ENCODE measurements at regions of chr1 and their contacts with region 1.

Region 1: DNA sequence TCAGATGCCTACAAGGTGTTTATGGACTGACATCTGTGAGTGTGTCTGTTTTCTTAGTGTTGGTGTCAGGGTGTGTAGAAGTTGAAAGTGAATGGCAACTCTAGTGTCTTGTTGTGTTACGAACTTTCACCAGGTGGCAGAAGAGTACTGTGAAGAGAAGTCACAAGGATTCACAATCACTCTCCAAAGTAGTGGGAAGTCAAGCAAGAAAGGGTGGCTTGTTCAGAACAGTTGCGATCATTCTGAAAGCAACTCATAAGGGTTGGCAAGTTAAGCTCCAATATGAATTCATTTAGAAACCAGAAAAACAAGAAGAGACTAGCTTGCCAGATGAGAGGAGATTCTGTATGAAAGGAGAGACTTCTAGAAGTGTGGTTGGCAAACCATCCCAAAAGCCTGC is 86.1 kb downstream of the FASLG start:
- DNase-seq: peak; percentile 82
- ATAC-seq: peak; percentile 68
- H3K4me3 ChIP-seq: no peak overlapping the region
- H3K4me3 Mint-ChIP-seq: peak overlapping the region; percentile 61
- H3K27ac ChIP-seq: no peak overlapping the region
- H3K27ac Mint-ChIP-seq: peak overlapping the region; percentile 13
- H3K4me1 ChIP-seq: peaks cover 26 to 27% of the 10 kb centered on the region in 2 donors
- H3K4me1 Mint-ChIP-seq: peaks cover 32% of the 10 kb centered on the region
- H3K27me3 ChIP-seq: peaks cover 0 to 8% (median 0%) of the 10 kb centered on the region in 4 experiments
- H3K27me3 Mint-ChIP-seq: peaks cover 5% of the 10 kb centered on the region
- CTCF ChIP-seq: peak; percentile 83

Region 2: DNA sequence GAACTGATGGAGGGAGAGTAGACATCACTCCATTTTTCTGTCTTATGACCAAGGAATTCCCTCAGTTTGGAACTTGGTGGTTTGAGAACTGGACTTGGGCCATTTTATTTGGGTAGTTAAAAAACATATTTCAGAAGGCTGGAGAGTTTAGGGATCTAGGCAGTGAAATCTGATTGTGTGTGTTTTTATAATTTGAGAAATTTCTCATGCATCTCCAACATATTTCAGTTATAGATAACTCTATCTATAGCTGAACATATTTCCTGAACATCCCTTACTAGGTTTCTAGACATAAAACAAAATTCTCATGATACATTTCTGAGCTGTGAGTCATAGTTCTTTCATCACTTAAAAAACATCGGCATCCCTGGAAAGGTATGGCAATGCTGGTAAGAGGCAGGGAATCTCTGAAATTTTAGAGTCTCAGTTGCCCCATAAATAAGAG is 16.6 kb after region 1 on chr1:
- CTCF ChIA-PET with region 1: interaction called, 53 read pairs
- POLR2A ChIA-PET with region 1: no interaction called
- intact Hi-C with region 1: no loop called
- DNase-seq: no peak
- ATAC-seq: no peak
- H3K4me3 ChIP-seq: no peak overlapping the region
- H3K4me3 Mint-ChIP-seq: no peak overlapping the region
- H3K27ac ChIP-seq: no peak overlapping the region
- H3K27ac Mint-ChIP-seq: no peak overlapping the region
- H3K4me1 ChIP-seq: peaks cover 23 to 24% of the 10 kb centered on the region in 2 donors
- H3K4me1 Mint-ChIP-seq: peaks cover 33% of the 10 kb centered on the region
- H3K27me3 ChIP-seq: peaks cover 0 to 6% (median 0%) of the 10 kb centered on the region in 4 experiments
- H3K27me3 Mint-ChIP-seq: peaks cover 7% of the 10 kb centered on the region
- CTCF ChIP-seq: no peak

Region 3: DNA sequence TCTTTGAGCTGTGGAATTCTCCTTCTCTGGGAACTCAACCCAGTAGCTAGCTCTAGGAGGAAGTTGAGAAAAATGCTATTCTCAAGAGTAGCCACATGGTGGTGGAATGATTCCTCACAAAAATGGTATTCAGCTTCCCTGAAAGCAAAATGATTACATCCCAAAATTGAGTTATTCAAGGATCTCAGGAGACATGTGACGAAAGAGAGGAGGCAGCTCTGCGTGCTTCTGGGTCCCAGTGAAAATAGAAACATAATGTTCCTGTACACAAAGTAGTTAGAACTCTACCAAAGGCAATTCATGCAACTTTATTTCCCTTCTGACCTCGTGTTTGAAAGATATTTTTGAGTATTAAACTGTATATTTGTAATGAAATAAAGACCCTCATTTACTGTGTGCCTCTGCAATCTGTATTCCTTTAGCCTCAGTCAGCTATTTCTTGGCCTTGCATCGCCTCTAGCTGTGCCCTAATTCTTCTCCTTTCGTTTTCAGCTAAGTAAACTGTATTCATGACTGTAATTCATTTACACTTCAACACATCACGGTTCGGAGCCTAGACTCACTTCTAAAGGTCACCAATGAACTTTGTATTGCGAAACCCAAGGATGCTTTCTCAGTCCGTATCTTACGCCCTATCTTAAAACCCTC is 81.2 kb after region 1 on chr1:
- CTCF ChIA-PET with region 1: interaction called, 122 read pairs
- POLR2A ChIA-PET with region 1: interaction called, 3 read pairs
- intact Hi-C with region 1: loop called (anchors 1 kb)
- DNase-seq: peak; percentile 43
- ATAC-seq: peak; percentile 62
- H3K4me3 ChIP-seq: peak overlapping the region in 1 of 5 experiments; percentile 13
- H3K4me3 Mint-ChIP-seq: no peak overlapping the region
- H3K27ac ChIP-seq: no peak overlapping the region
- H3K27ac Mint-ChIP-seq: no peak overlapping the region
- H3K4me1 ChIP-seq: peaks cover 9% of the 10 kb centered on the region in 2 donors
- H3K4me1 Mint-ChIP-seq: no peaks in the 10 kb centered on the region
- H3K27me3 ChIP-seq: no peaks in the 10 kb centered on the region
- H3K27me3 Mint-ChIP-seq: no peaks in the 10 kb centered on the region
- CTCF ChIP-seq: peak; percentile 63

Region 4: DNA sequence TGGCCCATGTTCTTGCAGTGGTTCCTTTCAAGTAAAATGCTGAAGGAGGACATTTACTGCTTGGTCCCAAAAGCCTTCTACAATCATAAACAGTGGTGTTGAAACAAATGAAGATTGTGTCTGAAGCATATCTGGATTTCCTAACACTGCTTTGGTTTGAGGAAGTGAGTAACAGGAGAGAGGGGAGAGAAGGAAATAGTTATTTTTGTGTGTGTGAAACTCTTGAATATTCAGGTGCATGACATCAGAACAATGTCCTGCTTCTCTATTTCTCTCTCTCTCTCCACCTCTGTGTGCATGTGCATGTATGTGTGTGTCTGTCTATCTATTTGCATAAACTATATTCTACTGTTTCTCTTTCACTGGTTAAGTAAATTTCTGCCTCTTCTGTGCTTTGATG is 367.1 kb after region 1 on chr1:
- CTCF ChIA-PET with region 1: interaction called, 4 read pairs
- POLR2A ChIA-PET with region 1: no interaction called
- intact Hi-C with region 1: loop called (anchors 2 kb)
- DNase-seq: peak; percentile 73
- ATAC-seq: peak; percentile 94
- H3K4me3 ChIP-seq: no peak overlapping the region
- H3K4me3 Mint-ChIP-seq: peak overlapping the region; percentile 12
- H3K27ac ChIP-seq: peak overlapping the region; percentile 10 to 36
- H3K27ac Mint-ChIP-seq: peak overlapping the region; percentile 28
- H3K4me1 ChIP-seq: peaks cover 16 to 20% of the 10 kb centered on the region in 2 donors
- H3K4me1 Mint-ChIP-seq: peaks cover 36% of the 10 kb centered on the region
- H3K27me3 ChIP-seq: no peaks in the 10 kb centered on the region
- H3K27me3 Mint-ChIP-seq: no peaks in the 10 kb centered on the region
- CTCF ChIP-seq: no peak

Region 5: DNA sequence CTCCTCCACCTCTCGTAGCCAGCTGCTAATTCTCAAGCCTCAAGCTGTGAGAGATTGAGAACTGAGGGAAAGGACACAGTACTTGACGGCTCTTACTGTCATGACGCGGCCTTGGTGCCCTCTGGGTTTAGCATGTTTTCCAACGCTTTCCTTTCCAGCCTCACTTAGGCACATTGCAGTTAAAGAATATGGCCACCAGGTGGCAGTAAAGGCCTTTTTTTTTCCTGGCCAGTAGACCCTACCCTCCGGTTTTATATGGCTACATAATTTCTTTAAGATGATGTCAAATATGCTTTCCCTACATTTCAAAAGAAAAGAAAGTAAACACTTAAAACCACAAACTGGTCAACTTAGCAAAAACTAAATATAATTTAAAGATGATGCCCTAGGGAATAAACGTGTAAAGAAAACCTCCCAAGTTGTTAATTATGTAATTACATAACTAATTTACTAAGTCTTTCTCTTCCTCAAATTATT is 675.4 kb after region 1 on chr1:
- CTCF ChIA-PET with region 1: interaction called, 85 read pairs
- POLR2A ChIA-PET with region 1: no interaction called
- intact Hi-C with region 1: loop called (anchors 1 kb)
- DNase-seq: peak; percentile 84
- ATAC-seq: peak; percentile 36
- H3K4me3 ChIP-seq: no peak overlapping the region
- H3K4me3 Mint-ChIP-seq: peak overlapping the region; percentile 44
- H3K27ac ChIP-seq: no peak overlapping the region
- H3K27ac Mint-ChIP-seq: peak overlapping the region; percentile 77
- H3K4me1 ChIP-seq: peaks cover 35 to 44% of the 10 kb centered on the region in 2 donors
- H3K4me1 Mint-ChIP-seq: peaks cover 55% of the 10 kb centered on the region
- H3K27me3 ChIP-seq: no peaks in the 10 kb centered on the region
- H3K27me3 Mint-ChIP-seq: no peaks in the 10 kb centered on the region
- CTCF ChIP-seq: peak; percentile 94

Region 6: GRCh38 chr1:173824331-173825081 is 1079.5 kb after region 1 on chr1 and contains the starts of genes CENPL and DARS2:
- CTCF ChIA-PET with region 1: interaction called, 22 read pairs
- POLR2A ChIA-PET with region 1: no interaction called
- intact Hi-C with region 1: loop called (anchors 1 kb)
- DNase-seq: peak; percentile 94
- ATAC-seq: peak; percentile 89
- H3K4me3 ChIP-seq: peak within 1 kb of the TSS; percentile 78 to 100 (median 93)
- H3K4me3 Mint-ChIP-seq: peak within 1 kb of the TSS; percentile 92
- H3K27ac ChIP-seq: peak within 1 kb of the TSS; percentile 77 to 87
- H3K27ac Mint-ChIP-seq: peak within 1 kb of the TSS; percentile 95
- H3K4me1 ChIP-seq: peaks cover 8 to 18% of the 10 kb centered on the region in 2 donors
- H3K4me1 Mint-ChIP-seq: peaks cover 21% of the 10 kb centered on the region
- H3K27me3 ChIP-seq: no peaks in the 10 kb centered on the region
- H3K27me3 Mint-ChIP-seq: no peaks in the 10 kb centered on the region
- CTCF ChIP-seq: no peak
- total RNA-seq, gene CENPL: 9.7 and 14.4 TPM in 2 replicates
- total RNA-seq, gene DARS2: 17.0 and 17.3 TPM in 2 replicates

Measured in B cell (primary cell).